CD4-positive, alpha-beta memory T cell (primary cell): ENCODE measurements at regions of chr1 and their contacts with region 1.

Region 1: DNA sequence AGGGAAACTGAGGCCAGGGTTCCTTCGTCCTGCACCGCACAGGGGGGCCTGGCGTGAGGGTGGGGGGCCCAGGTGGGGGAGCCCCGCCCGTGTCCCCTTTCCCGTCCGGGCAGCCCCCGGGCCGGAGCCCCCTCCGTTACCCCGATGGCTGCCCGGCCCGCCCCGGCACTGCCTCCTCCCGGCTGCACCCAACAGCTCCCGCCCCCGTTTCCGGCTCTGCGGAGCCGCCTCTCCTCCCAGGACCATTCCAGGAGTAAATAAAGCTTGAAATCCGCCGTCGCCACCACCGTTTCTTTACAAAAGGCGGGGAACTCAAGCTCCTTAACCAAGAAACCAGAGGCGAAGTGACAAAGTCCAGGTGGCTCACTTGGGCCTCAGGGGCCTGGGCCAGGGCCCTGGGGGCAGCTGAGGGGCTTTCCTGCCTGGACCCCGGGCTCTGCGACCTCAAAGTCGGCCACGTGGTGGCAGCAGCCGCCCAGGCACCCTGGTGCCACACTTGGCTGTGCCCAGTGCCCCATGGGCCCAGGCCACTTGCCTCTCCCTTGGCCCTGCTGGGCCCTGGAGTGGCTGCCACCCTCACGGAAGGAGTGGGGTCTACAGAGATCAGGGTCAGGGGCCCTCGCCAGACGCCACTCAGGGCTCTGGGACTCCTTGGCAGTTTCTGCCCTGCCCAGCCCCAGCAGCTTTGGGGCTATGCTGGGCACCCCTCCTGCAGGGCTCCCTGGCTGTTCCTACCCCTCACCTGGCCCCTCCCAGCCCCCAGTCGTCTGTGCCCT is 514 bp upstream of the FAAP20 start:
- DNase-seq: peak; percentile 91 to 98 (median 94)
- H3K4me3 ChIP-seq: peak overlapping the region; percentile 57 to 68
- H3K4me3 Mint-ChIP-seq: peak overlapping the region; percentile 82 to 94 (median 84)
- H3K27ac ChIP-seq: peak overlapping the region; percentile 64
- H3K27ac Mint-ChIP-seq: peak overlapping the region; percentile 87 to 97 (median 92)
- H3K4me1 ChIP-seq: peaks cover 49% of the 10 kb centered on the region
- H3K4me1 Mint-ChIP-seq: peaks cover 8 to 43% (median 24%) of the 10 kb centered on the region in 4 donors
- H3K27me3 ChIP-seq: no peaks in the 10 kb centered on the region
- H3K27me3 Mint-ChIP-seq: no peaks in the 10 kb centered on the region

Region 2: DNA sequence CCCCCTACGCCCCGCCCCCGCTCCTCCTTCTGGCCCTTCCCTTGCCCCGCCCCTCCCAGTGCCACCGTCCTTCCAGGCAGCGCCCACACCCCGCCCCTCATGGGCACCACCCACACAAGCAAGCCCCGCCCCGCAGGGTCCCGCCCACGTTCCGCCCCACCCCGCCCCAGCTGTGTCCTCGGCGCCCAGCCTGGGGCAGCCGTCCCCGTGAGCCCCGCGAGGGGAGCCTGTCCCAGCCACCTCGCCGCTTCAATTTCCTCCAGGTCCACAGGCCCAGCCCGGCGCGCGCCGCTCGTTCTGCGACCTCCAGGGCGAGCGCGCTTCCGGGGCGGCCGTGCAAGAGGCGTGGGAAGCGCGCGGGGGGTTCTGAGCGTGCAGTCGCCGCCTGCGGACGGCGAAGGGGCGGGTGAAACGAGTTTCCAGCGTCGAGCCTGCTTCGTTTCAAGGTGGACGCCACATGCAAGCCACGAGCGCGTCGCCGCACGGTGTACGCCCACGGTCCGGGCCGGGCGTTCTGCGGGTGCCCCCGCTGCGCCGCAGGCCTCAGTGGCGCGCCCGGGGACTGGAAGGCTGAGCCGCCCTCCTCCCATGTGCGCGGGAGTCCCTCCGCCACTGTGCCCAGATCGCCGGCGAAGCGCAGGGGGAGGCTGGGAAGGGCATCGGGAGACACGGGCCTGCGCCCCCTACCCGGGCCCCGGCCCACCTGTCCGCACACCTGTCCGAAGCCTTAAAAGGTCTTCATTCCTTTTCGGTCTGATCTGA is 10.3 kb after region 1 on chr1:
- CTCF ChIA-PET with region 1: interaction called, 7 read pairs
- POLR2A ChIA-PET with region 1: interaction called, 9 read pairs
- intact Hi-C with region 1: loop called (anchors 1 kb)
- DNase-seq: peak; percentile 90 to 95 (median 91)
- H3K4me3 ChIP-seq: peak overlapping the region; percentile 6 to 47
- H3K4me3 Mint-ChIP-seq: peak overlapping the region; percentile 48 to 71 (median 68)
- H3K27ac ChIP-seq: peak overlapping the region; percentile 38
- H3K27ac Mint-ChIP-seq: peak overlapping the region in 3 of 7 donors; percentile 35 to 79 (median 62)
- H3K4me1 ChIP-seq: peaks cover 26% of the 10 kb centered on the region
- H3K4me1 Mint-ChIP-seq: peaks cover 0 to 15% (median 3%) of the 10 kb centered on the region in 4 donors
- H3K27me3 ChIP-seq: no peaks in the 10 kb centered on the region
- H3K27me3 Mint-ChIP-seq: no peaks in the 10 kb centered on the region

Region 3: DNA sequence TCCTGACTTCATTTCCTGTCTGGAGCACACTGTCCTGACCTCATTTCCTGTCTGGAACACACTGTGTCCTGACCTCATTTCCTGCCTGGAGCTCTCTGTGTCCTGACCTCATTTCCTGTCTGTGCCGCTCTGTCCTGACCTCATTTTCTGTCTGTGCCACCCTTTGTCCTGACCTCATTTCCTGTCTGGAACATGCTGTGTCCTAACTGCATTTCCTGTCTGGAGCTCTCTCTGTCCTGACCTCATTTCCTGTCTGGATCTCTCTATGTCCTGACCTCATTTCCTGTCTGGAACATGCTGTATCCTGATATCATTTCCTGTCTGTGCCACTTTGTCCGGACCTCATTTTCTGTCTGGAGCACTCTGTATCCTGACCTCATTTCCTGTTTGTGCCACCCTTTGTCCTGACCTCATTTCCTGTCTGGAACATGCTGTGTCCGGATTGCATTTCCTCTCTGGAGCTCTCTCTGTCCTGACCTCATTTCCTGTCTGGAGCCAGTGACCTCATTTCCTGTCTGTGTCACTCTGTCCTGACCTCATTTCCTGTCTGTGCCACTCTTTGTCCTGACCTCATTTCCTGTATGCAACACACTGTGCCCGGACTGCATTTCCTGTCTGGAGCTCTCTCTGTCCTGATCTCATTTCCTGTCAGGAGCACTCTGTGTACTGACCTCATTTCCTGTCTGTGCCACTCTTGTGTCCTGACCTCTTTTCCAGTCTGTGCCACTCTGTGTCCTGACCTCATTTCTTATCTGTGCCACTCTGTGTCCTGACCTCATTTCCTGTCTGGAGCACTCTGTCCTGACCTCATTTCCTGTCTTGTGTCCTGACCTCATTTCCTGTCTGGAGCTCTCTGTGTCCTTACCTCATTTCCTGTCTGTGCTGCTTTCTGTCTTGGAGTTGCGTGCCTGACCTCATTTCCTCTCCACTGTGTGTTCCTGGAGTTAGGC is 60.6 kb after region 1 on chr1:
- CTCF ChIA-PET with region 1: interaction called, 6 read pairs
- POLR2A ChIA-PET with region 1: interaction called, 14 read pairs
- intact Hi-C with region 1: loop called (anchors 1 kb)
- DNase-seq: peak; percentile 87 to 96 (median 92)
- H3K4me3 ChIP-seq: no peak overlapping the region
- H3K4me3 Mint-ChIP-seq: no peak overlapping the region
- H3K27ac ChIP-seq: peak overlapping the region; percentile 95
- H3K27ac Mint-ChIP-seq: no peak overlapping the region
- H3K4me1 ChIP-seq: peaks cover 87% of the 10 kb centered on the region
- H3K4me1 Mint-ChIP-seq: peaks cover 31 to 59% (median 40%) of the 10 kb centered on the region in 4 donors
- H3K27me3 ChIP-seq: no peaks in the 10 kb centered on the region
- H3K27me3 Mint-ChIP-seq: no peaks in the 10 kb centered on the region

Region 4: GRCh38 chr1:2381741-2382620 is 186.9 kb after region 1 on chr1:
- CTCF ChIA-PET with region 1: interaction called, 236 read pairs
- POLR2A ChIA-PET with region 1: interaction called, 68 read pairs
- intact Hi-C with region 1: loop called (anchors 1 kb)
- DNase-seq: peak; percentile 65 to 76 (median 70)
- H3K4me3 ChIP-seq: no peak overlapping the region
- H3K4me3 Mint-ChIP-seq: no peak overlapping the region
- H3K27ac ChIP-seq: no peak overlapping the region
- H3K27ac Mint-ChIP-seq: peak overlapping the region in 1 of 7 donors; percentile 35
- H3K4me1 ChIP-seq: peaks cover 9% of the 10 kb centered on the region
- H3K4me1 Mint-ChIP-seq: peaks cover 0 to 3% (median 0%) of the 10 kb centered on the region in 4 donors
- H3K27me3 ChIP-seq: no peaks in the 10 kb centered on the region
- H3K27me3 Mint-ChIP-seq: no peaks in the 10 kb centered on the region

Region 5: DNA sequence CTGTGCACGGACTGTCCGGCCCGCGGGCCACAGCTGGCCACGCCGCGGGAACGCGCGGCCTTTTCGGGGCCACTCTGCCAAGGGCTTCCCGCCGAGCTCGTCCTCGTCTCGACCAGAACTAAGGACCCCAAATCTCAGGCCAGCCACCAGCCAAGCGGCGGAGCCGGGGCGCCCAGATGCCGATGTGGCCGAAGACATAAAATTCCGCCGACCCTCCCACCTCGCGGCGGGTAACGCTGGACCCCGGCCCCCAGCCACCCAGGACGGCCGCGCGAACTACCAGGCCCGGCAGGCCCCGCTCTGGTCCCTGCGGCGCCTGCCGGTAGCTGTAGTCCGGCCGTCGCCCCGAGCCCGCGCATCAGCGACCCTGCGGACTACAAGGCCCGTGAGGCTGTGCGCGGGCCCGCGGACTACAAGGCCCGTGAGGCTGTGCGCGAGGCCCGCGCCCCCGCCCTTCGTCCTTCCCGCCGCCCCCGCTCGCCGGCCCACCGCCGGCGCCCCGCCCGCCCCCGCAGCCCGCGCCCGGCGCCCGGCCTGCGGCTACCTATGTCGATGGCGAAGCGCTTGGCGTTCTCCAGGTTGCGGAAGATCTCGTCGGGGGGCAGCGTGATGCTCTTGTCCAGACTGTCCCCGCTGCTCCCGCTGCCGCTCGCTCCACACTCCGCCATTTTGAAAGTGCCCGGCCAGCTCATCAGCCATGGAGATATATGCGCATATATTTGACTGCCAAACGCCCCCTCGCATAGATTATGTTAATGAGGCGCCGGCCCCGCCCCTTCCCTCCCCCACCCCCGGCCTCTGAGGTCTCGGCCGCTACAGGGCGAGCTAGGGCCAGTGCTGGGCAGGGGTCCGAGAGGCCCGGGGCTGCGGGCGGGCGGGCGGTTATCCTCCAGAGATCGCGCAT is 331.1 kb after region 1 on chr1 and contains the start of gene PANK4:
- CTCF ChIA-PET with region 1: interaction called, 5 read pairs
- POLR2A ChIA-PET with region 1: interaction called, 7 read pairs
- intact Hi-C with region 1: loop called (anchors 5 kb)
- DNase-seq: peak; percentile 86 to 90 (median 89)
- H3K4me3 ChIP-seq: peak within 1 kb of the TSS; percentile 31 to 96
- H3K4me3 Mint-ChIP-seq: peak within 1 kb of the TSS; percentile 89 to 97 (median 95)
- H3K27ac ChIP-seq: peak within 1 kb of the TSS; percentile 86
- H3K27ac Mint-ChIP-seq: peak within 1 kb of the TSS; percentile 86 to 98 (median 97)
- H3K4me1 ChIP-seq: peaks cover 64% of the 10 kb centered on the region
- H3K4me1 Mint-ChIP-seq: peaks cover 27 to 63% (median 47%) of the 10 kb centered on the region in 4 donors
- H3K27me3 ChIP-seq: peaks cover 9% of the 10 kb centered on the region
- H3K27me3 Mint-ChIP-seq: peaks cover 5 to 11% of the 10 kb centered on the region in 2 donors
- total RNA-seq, gene PANK4: 88.9 to 93.7 TPM